ENCODE measurements at regions of chr19 and their contacts with region 1.

Region 1: GRCh38 chr19:45643024-45643926 is 4.1 kb upstream of the EML2 start:
- DNase-seq: peak; percentile 90
- H3K4me3 ChIP-seq: peak overlapping the region; percentile 3
- H3K27ac ChIP-seq: peak overlapping the region; percentile 86
- H3K4me1 ChIP-seq: peaks cover 54% of the 10 kb centered on the region
- CTCF ChIP-seq: peak; percentile 99

Region 2: DNA sequence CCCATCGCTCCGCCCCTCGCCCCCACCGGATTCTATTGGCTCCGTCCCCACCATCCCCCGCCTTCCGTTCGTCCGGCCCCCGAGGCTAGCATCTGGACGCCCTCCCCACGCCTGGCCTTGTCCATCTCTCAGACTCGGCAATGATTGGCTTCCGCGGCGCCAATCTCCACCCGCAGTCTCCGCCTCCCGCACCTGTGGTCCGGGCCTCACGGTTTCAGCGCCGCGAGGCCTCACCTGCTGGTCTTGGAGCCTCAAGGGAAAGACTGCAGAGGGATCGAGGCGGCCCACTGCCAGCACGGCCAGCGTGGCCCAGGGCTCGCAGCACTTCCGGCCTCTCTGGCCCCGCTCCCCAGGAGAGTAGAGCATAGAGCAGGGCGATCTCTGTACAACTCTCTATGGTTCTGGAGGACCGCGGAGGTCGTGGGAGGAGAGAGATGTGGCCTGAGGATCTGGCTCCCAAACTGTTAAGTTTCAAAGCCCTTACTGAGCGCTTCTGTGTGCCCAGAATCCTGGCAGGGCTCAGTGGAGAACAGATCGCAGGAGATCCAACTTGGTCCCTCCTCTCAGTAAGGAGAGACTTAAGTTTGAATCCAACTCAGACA is 219.6 kb before region 1 on chr19 and contains the start of gene ERCC1:
- CTCF ChIA-PET with region 1: no interaction called
- POLR2A ChIA-PET with region 1: no interaction called
- intact Hi-C with region 1: loop called (anchors 10 kb)
- DNase-seq: peak; percentile 96
- H3K4me3 ChIP-seq: peak within 1 kb of the TSS; percentile 82
- H3K27ac ChIP-seq: peak within 1 kb of the TSS; percentile 79
- H3K4me1 ChIP-seq: peaks cover 74% of the 10 kb centered on the region
- CTCF ChIP-seq: no peak
- total RNA-seq, gene ERCC1: 125 and 126 TPM in 2 replicates

Region 3: GRCh38 chr19:45506246-45506990 is 136.9 kb before region 1 on chr19:
- CTCF ChIA-PET with region 1: no interaction called
- POLR2A ChIA-PET with region 1: no interaction called
- intact Hi-C with region 1: loop called (anchors 5 kb)
- DNase-seq: peak; percentile 97
- H3K4me3 ChIP-seq: peak overlapping the region; percentile 92
- H3K27ac ChIP-seq: peak overlapping the region; percentile 85
- H3K4me1 ChIP-seq: peaks cover 31% of the 10 kb centered on the region
- CTCF ChIP-seq: peak; percentile 85

Region 4: GRCh38 chr19:45523642-45524256 is 119.5 kb before region 1 on chr19:
- CTCF ChIA-PET with region 1: no interaction called
- POLR2A ChIA-PET with region 1: no interaction called
- intact Hi-C with region 1: loop called (anchors 1 kb)
- DNase-seq: peak; percentile 90
- H3K4me3 ChIP-seq: no peak overlapping the region
- H3K27ac ChIP-seq: no peak overlapping the region
- H3K4me1 ChIP-seq: peaks cover 4% of the 10 kb centered on the region
- CTCF ChIP-seq: peak; percentile 98

Region 5: GRCh38 chr19:45558399-45558878 is 84.8 kb before region 1 on chr19:
- CTCF ChIA-PET with region 1: no interaction called
- POLR2A ChIA-PET with region 1: interaction called, 3 read pairs
- intact Hi-C with region 1: loop called (anchors 1 kb)
- DNase-seq: peak; percentile 92
- H3K4me3 ChIP-seq: no peak overlapping the region
- H3K27ac ChIP-seq: no peak overlapping the region
- H3K4me1 ChIP-seq: peaks cover 36% of the 10 kb centered on the region
- CTCF ChIP-seq: peak; percentile 98

Region 6: GRCh38 chr19:45584332-45585157 is 58.7 kb before region 1 on chr19 and contains the start of gene OPA3:
- CTCF ChIA-PET with region 1: no interaction called
- POLR2A ChIA-PET with region 1: interaction called, 5 read pairs
- intact Hi-C with region 1: loop called (anchors 1 kb)
- DNase-seq: peak; percentile 100
- H3K4me3 ChIP-seq: peak within 1 kb of the TSS; percentile 93
- H3K27ac ChIP-seq: peak within 1 kb of the TSS; percentile 77
- H3K4me1 ChIP-seq: peaks cover 10% of the 10 kb centered on the region
- CTCF ChIP-seq: no peak
- total RNA-seq, gene OPA3: 4.4 and 5.8 TPM in 2 replicates